ENCODE measurements at regions of chr18 and their contacts with region 1.

Region 1: DNA sequence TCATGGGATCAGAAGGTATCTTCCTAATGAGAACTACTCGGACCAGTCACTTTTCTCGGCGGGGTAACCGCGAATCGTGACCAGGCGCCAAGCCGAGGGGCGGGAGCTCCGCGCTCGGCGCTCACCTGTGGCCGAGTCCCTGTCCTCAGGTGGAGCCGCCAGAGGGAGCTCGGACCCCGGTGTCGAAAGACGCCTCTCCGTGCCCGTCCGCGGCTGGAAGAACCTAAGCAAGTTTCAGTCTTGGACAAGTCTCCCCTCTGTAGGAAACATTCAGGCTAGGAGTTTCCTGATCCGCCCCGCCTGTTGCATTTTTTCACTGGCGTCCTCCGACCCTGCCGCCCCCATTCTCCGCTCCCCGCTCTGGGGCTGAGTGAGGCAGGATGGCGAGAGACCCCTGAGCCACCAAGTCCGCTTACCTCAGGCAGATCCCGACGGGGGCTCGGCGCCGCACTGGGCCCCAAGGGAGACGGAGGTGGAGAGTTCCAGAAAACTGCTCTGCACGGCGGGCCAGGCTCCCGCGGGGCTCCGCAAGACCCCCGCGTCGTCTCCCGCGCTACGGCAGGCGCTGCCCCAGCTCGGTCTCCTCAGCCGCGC is 478 bp downstream of the DSEL start:
- DNase-seq: peak; percentile 14 to 52 (median 44)
- ATAC-seq: peak; percentile 5
- H3K4me3 ChIP-seq: peak overlapping the region; percentile 60
- H3K4me3 Mint-ChIP-seq: peak overlapping the region; percentile 84 to 97 (median 94)
- H3K27ac ChIP-seq: no peak overlapping the region
- H3K27ac Mint-ChIP-seq: peak overlapping the region in 5 of 9 donors; percentile 59 to 88 (median 78)
- H3K4me1 ChIP-seq: peaks cover 11 to 14% of the 10 kb centered on the region in 2 donors
- H3K4me1 Mint-ChIP-seq: peaks cover 16 to 34% (median 31%) of the 10 kb centered on the region in 7 donors
- H3K27me3 ChIP-seq: no peaks in the 10 kb centered on the region
- H3K27me3 Mint-ChIP-seq: peaks cover 0 to 57% (median 0%) of the 10 kb centered on the region in 5 donors

Region 2: GRCh38 chr18:67302043-67302442 is 214.0 kb before region 1 on chr18:
- CTCF ChIA-PET with region 1: no interaction called
- POLR2A ChIA-PET with region 1: no interaction called
- intact Hi-C with region 1: loop called in 1 of 2 experiments (anchors 2 kb)
- DNase-seq: peak in 2 of 9 donors; percentile 9 to 10
- ATAC-seq: no peak
- H3K4me3 ChIP-seq: no peak overlapping the region
- H3K4me3 Mint-ChIP-seq: peak overlapping the region in 8 of 10 donors; percentile 4 to 66 (median 52)
- H3K27ac ChIP-seq: no peak overlapping the region
- H3K27ac Mint-ChIP-seq: peak overlapping the region; percentile 47 to 90 (median 71)
- H3K4me1 ChIP-seq: peaks cover 0 to 4% of the 10 kb centered on the region in 2 donors
- H3K4me1 Mint-ChIP-seq: peaks cover 3 to 19% (median 12%) of the 10 kb centered on the region in 7 donors
- H3K27me3 ChIP-seq: no peaks in the 10 kb centered on the region
- H3K27me3 Mint-ChIP-seq: no peaks in the 10 kb centered on the region

Region 3: GRCh38 chr18:68623342-68623741 is 1107.3 kb after region 1 on chr18:
- CTCF ChIA-PET with region 1: no interaction called
- POLR2A ChIA-PET with region 1: no interaction called
- intact Hi-C with region 1: loop called in 1 of 2 experiments (anchors 1 kb)
- DNase-seq: peak in 6 of 9 donors; percentile 2 to 26 (median 8)
- ATAC-seq: peak; percentile 40
- H3K4me3 ChIP-seq: no peak overlapping the region
- H3K4me3 Mint-ChIP-seq: no peak overlapping the region
- H3K27ac ChIP-seq: no peak overlapping the region
- H3K27ac Mint-ChIP-seq: no peak overlapping the region
- H3K4me1 ChIP-seq: no peaks in the 10 kb centered on the region
- H3K4me1 Mint-ChIP-seq: no peaks in the 10 kb centered on the region
- H3K27me3 ChIP-seq: no peaks in the 10 kb centered on the region
- H3K27me3 Mint-ChIP-seq: peaks cover 0 to 12% (median 4%) of the 10 kb centered on the region in 5 donors

Region 4: DNA sequence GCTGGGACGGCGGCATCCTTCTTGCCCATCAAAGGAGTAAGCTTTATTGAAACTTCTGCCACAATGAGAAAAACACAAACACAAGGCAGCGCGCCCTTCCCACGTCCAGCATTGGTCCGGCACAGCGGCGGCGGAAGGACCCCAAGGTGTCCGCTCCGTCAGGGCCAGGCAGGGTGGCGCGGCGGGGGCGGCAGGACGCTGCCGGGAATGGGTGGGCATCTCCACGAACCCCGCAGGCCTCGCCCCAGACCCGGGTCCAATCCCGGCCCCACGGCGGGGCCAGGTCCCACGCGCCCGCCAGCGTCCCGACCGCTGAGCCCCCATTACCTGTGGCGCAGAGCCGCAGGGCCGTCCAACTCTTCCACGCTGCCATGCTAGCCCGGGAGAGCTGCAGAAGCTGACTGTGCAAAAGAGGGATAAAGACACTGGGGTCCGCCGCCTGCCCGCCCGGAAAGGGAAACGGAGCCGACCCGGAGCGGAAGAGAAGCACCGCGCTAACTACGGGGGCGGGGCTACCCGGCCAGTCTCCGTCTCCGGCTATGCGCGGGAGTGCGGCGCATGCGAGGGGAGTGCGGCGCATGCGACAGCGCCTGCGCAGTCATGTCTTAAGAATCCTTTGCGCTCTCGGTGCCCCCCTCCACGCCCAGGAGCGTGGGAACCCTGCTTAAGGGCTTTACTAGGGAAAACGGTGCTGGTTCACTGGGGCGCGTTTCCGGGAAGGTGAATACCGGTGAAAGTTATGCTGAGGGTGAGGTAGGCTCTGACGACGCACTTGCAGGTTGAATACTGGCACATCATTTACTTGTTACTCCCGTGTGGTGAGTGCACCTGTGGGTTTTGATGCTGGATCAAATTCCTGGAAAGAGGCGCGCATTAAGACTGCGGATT is 1198.8 kb after region 1 on chr18 and contains the start of gene TMX3:
- CTCF ChIA-PET with region 1: no interaction called
- POLR2A ChIA-PET with region 1: interaction called, 3 read pairs
- intact Hi-C with region 1: loop called (anchors 1 kb)
- DNase-seq: peak; percentile 86 to 93 (median 90)
- ATAC-seq: peak; percentile 99
- H3K4me3 ChIP-seq: peak within 1 kb of the TSS; percentile 86
- H3K4me3 Mint-ChIP-seq: peak within 1 kb of the TSS; percentile 93 to 100 (median 96)
- H3K27ac ChIP-seq: peak within 1 kb of the TSS; percentile 74
- H3K27ac Mint-ChIP-seq: peak within 1 kb of the TSS; percentile 88 to 98 (median 95)
- H3K4me1 ChIP-seq: peaks cover 4 to 17% of the 10 kb centered on the region in 2 donors
- H3K4me1 Mint-ChIP-seq: peaks cover 21 to 61% (median 53%) of the 10 kb centered on the region in 7 donors
- H3K27me3 ChIP-seq: no peaks in the 10 kb centered on the region
- H3K27me3 Mint-ChIP-seq: no peaks in the 10 kb centered on the region
- total RNA-seq, gene TMX3: 42.0 to 76.5 (median 63.2) TPM

Measured in naive thymus-derived CD4-positive, alpha-beta T cell (primary cell).